PC-3 (cell line): ENCODE measurements at regions of chr4 and their contacts with region 1.

Region 1: DNA sequence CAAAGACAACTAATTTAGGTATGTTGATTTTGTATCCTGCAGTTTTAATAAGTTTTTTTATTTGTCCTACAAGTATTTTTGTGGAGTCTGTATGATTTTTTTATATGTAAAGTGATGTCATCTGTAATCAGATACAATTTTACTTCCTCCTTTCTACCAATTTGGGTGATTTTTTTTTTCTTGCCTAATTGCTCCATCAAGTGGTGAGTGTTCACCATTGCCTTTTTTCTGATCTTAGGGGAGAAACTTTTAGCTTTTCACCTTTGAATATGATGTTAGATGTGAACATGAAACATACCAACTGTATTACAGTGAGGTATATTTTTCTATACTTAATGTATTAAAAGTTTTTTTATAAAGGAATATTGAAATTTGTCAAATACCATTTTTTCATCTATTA is 362.3 kb downstream of the PABPC4L start:
- DNase-seq: peak; percentile 7
- ATAC-seq: no peak
- H3K4me3 ChIP-seq: no peak overlapping the region
- H3K27ac ChIP-seq: no peak overlapping the region
- H3K4me1 ChIP-seq: no peaks in the 10 kb centered on the region
- H3K27me3 ChIP-seq: no peaks in the 10 kb centered on the region
- CTCF ChIP-seq: peak; percentile 33; the same call in 1 of the 2 replicates

Region 2: DNA sequence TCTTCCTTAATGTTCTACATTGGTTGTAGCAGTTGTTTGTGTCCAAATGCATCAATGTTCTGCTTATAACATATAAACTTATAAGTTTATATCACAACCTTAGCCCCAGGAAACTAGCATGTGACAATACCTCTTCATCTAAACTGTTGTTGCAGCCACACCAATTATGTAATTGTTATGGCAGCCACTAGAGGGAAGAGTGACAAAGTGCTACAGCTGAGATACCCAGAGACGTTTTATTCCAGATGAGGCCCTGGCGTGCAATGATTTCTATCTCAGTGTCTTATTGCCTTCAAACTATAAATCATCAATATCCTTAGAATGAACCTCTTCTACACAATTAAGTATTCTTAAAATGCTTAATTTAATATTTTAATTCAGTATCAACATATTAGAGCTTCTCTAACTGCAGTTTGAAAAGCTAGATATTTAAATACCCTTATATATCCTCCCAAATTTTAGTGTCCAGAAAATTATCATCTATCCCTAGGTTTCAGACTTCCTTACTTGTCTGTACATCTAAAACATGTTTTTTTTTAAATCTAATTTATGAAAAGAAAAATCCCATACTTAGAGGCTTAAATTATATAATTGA is 518.7 kb before region 1 on chr4:
- CTCF ChIA-PET with region 1: no interaction called
- POLR2A ChIA-PET with region 1: no interaction called
- intact Hi-C with region 1: loop called (anchors 10 kb)
- DNase-seq: peak; percentile 52
- ATAC-seq: peak; percentile 51
- H3K4me3 ChIP-seq: no peak overlapping the region
- H3K27ac ChIP-seq: no peak overlapping the region
- H3K4me1 ChIP-seq: no peaks in the 10 kb centered on the region
- H3K27me3 ChIP-seq: no peaks in the 10 kb centered on the region
- CTCF ChIP-seq: peak; percentile 64